Posterior vena cava (tissue), 2 donors: ENCODE measurements at regions of chr20 and their contacts with region 1.

Region 1: DNA sequence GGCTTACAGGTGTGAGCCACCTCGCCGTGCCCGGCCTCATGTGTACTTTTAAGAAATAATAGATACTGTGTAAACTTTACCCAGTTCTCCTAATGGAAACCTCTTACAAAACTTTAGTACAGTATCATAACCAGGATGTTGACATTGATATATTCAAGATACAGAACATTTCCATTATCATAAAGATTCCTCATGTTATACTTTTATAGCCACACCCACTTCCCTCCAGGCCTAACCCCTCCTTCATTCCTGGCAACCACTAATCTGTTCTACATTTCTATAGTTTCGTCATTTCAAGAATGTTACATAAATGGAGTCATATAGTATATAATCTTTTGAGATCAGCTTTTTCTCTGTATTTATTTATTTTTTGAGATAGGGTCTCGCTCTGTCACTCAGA is 52.6 kb upstream of the SALL4 start:
- DNase-seq: no peak

Region 2: GRCh38 chr20:51354769-51355319 is 500.1 kb before region 1 on chr20:
- intact Hi-C with region 1: loop called in 1 of 2 experiments (anchors 5 kb)
- DNase-seq: no peak

Region 3: DNA sequence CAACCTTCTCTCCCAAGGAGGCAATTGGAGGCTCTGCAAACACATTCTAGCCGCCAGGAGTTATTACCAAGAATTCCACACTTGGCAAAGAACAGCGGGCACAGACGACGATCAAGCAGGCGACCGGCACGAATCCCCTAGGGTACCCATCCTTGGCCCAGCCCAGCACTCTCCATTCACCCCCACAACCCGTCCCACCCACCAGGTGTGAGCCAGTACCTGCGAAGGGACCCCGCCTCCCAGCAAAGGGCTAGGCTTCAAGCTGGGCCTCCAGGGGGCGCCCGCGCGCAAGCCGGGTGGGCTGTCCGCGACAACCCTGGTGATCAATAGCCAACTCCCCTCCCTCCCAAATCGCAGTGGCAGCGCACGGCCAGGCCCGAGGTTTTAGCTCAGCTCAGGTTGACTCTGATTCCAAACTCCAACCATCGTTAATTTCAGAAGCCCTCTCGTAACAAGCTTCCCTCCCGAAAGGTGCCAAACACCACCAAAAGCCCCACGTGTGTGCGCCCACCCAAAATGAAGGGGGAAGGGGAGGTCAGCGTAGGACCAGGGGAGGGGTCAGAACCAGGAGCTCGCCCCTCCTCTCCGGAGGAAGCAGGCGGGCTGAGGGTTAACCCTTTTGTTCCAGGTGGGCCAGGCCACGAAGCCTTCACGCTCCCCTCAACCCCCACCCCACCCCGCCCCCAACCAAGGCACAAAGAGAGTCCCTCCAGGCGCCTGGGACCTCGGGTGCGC is 54.7 kb before region 1 on chr20:
- intact Hi-C with region 1: no loop called
- DNase-seq: no peak

Region 4: GRCh38 chr20:51815018-51815761 is 39.7 kb before region 1 on chr20:
- intact Hi-C with region 1: no loop called
- DNase-seq: peak; percentile 10

Region 5: GRCh38 chr20:51871867-51872304 is 17.0 kb after region 1 on chr20:
- intact Hi-C with region 1: no loop called
- DNase-seq: no peak

Region 6: DNA sequence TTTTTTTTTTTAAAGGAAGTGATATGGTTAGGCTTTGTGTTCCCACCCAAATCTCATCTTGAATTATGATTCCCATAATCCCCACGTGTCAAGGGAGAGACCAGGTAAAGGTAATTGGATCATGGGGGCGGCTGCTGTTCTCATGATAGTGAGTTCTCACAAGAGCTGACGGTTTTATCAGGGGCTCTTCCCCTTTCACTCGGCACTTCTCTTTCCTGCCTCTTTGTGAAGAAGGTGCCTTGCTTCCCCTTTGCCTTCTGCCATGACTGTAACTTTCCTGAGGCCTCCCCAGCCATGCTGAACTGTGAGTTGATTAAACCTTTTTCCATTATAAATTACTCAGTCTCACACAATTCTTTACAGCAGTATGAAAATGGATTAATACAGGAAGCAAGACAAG is 272.4 kb after region 1 on chr20:
- intact Hi-C with region 1: no loop called
- DNase-seq: no peak